ENCODE measurements at regions of chr5 and their contacts with region 1.

Region 1: DNA sequence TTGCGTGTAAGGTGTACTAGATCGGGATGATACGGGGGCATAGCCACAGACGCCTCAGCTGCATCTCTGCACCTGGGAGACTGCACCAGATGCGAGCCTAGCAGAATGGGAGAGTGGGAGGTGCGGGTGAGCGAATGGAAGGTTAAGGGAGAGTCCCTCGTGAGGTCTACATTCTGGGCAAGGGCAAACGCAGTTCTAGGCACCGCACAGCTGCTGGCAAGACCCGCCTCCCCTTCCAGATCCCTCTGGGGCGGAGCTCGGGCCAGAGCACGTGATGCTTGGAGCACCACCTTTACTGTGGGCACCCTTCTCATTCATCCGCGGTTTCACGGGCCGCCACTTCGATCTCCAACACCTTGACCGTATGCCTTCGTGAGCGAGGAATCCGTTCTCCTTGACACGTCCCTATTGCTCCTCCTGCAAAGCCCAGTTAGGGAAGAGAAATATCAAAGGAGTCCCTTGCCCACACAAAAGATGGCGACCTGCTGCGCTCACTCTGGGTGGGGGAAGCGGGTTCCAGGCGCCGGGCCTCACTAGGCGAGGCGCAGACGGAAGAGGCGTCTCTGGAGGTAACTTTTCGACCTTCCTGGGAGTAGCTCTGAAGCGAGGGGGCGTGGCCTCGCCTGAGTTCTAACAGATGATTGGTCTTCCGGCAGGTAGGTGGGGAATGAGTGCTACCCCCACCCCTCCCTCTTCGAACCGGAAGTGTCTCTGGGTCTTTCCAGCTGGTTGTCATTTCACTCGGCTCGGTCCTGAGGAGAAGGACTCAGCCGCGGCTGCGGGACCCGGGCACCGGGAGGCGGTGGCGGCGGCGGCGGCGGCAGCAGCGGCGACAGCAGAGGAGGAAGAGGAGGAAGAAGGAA is at the start of gene CPEB4:
- DNase-seq: peak; percentile 90 to 99 (median 97)
- ATAC-seq: peak; percentile 94 to 96
- H3K4me3 Mint-ChIP-seq: peak within 1 kb of the TSS; percentile 91 to 100 (median 98)
- H3K27ac Mint-ChIP-seq: peak within 1 kb of the TSS; percentile 92 to 100 (median 98)
- H3K4me1 Mint-ChIP-seq: peaks cover 44 to 86% (median 78%) of the 10 kb centered on the region in 4 donors
- H3K27me3 Mint-ChIP-seq: no peaks in the 10 kb centered on the region
- polyA plus RNA-seq, gene CPEB4: 1.2 to 4.4 (median 2.8) TPM

Region 2: DNA sequence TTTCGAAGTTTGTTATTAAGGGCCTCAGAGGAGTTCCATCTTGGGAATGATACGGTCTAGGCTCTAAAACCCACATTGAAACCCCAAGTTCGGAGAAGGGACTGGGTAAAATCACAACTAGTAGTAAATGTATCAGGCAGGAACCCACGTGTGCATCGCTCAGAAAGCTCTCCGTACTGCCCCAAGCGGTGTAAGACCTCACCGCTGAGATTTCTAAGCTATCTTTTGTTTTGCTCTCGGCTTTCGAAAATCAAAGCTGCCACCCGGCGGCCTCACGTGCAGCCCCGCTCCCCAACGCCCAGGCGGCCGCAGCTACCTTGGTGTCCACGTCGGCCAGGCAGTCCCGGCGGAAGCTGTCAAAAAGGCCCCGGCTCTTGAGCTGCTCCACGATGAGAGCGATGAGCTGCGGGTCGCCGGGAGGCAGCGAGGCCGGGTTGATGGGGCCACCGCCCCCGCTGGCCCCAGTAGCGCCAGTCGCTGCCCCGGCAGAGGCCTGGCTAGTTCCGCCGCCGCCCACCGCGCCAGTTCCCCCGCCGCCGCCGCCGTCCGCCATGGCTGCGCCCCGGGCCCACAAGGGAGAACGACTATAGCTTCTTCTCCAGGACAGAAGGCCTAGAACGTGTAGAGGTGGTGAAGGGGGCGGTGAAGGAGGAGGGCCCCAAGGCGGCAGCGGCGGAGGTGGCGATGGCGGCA is 271.8 kb before region 1 on chr5:
- POLR2A ChIA-PET with region 1: interaction called, 23 read pairs
- DNase-seq: peak; percentile 51 to 83 (median 68)
- ATAC-seq: peak; percentile 70 to 72
- H3K4me3 Mint-ChIP-seq: peak overlapping the region; percentile 86 to 97 (median 92)
- H3K27ac Mint-ChIP-seq: peak overlapping the region; percentile 57 to 99 (median 97)
- H3K4me1 Mint-ChIP-seq: peaks cover 22 to 54% (median 52%) of the 10 kb centered on the region in 4 donors
- H3K27me3 Mint-ChIP-seq: no peaks in the 10 kb centered on the region

Measured in naive thymus-derived CD8-positive, alpha-beta T cell (primary cell).